GM12878 (cell line): ENCODE measurements at regions of chr13 and their contacts with region 1.

Region 1: GRCh38 chr13:80399340-80400163 is 58.6 kb upstream of the SPRY2 start:
- DNase-seq: peak; percentile 17
- ATAC-seq: peak; percentile 62
- H3K4me3 ChIP-seq: no peak overlapping the region
- H3K27ac ChIP-seq: no peak overlapping the region
- H3K4me1 ChIP-seq: no peaks in the 10 kb centered on the region
- H3K27me3 ChIP-seq: no peaks in the 10 kb centered on the region
- CTCF ChIP-seq: no peak
- EP300 ChIP-seq: peak; percentile 13 to 56; a peak in 3 of 4 replicates
- POLR2A ChIP-seq: no peak
- RAD21 ChIP-seq: no peak

Region 2: DNA sequence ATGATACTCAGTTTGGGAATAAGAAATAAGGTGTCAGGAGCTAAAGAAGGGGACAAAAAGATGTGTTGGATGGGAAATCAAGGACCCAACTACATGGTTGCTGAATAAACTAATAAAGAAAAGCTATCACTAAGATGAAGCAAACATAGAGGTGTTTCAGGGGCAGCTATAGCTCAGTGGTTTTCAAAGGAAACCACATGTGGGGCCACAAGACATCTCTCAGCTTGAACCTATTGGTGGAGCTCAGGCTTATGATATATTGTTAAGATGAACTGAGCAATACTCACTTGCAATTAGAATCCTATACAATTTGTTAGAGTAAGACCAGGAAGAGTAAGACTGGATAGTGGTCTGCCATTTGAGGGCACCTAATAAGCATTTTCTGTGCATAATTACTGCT is 13.6 kb before region 1 on chr13:
- CTCF ChIA-PET with region 1: interaction called, 17 read pairs
- POLR2A ChIA-PET with region 1: interaction called, 7 read pairs
- RAD21 ChIA-PET with region 1: interaction called, 37 read pairs
- SMC1A ChIA-PET with region 1: interaction called, 37 read pairs
- in situ Hi-C with region 1: no loop called
- intact Hi-C with region 1: no loop called
- DNase-seq: no peak
- ATAC-seq: peak; percentile 91
- H3K4me3 ChIP-seq: no peak overlapping the region
- H3K27ac ChIP-seq: no peak overlapping the region
- H3K4me1 ChIP-seq: no peaks in the 10 kb centered on the region
- H3K27me3 ChIP-seq: no peaks in the 10 kb centered on the region
- CTCF ChIP-seq: no peak
- EP300 ChIP-seq: no peak
- POLR2A ChIP-seq: no peak
- RAD21 ChIP-seq: 0 out of 2 replicates have a peak, but pooled peaks have one; percentile 14

Region 3: GRCh38 chr13:80419416-80419815 is 19.9 kb after region 1 on chr13:
- CTCF ChIA-PET with region 1: interaction called, 15 read pairs
- POLR2A ChIA-PET with region 1: interaction called, 13 read pairs
- RAD21 ChIA-PET with region 1: interaction called, 49 read pairs
- SMC1A ChIA-PET with region 1: interaction called, 133 read pairs
- in situ Hi-C with region 1: no loop called
- intact Hi-C with region 1: no loop called
- DNase-seq: no peak
- ATAC-seq: peak; percentile 63
- H3K4me3 ChIP-seq: no peak overlapping the region
- H3K27ac ChIP-seq: no peak overlapping the region
- H3K4me1 ChIP-seq: no peaks in the 10 kb centered on the region
- H3K27me3 ChIP-seq: no peaks in the 10 kb centered on the region
- CTCF ChIP-seq: no peak
- EP300 ChIP-seq: no peak
- POLR2A ChIP-seq: no peak
- RAD21 ChIP-seq: no peak

Region 4: GRCh38 chr13:80444240-80445015 is 44.9 kb after region 1 on chr13:
- CTCF ChIA-PET with region 1: interaction called, 6 read pairs
- POLR2A ChIA-PET with region 1: interaction called, 6 read pairs
- RAD21 ChIA-PET with region 1: interaction called, 23 read pairs
- SMC1A ChIA-PET with region 1: interaction called, 707 read pairs
- in situ Hi-C with region 1: no loop called
- intact Hi-C with region 1: no loop called
- DNase-seq: no peak
- ATAC-seq: peak; percentile 51
- H3K4me3 ChIP-seq: no peak overlapping the region
- H3K27ac ChIP-seq: no peak overlapping the region
- H3K4me1 ChIP-seq: no peaks in the 10 kb centered on the region
- H3K27me3 ChIP-seq: no peaks in the 10 kb centered on the region
- CTCF ChIP-seq: no peak
- EP300 ChIP-seq: no peak
- POLR2A ChIP-seq: no peak
- RAD21 ChIP-seq: no peak

Region 5: DNA sequence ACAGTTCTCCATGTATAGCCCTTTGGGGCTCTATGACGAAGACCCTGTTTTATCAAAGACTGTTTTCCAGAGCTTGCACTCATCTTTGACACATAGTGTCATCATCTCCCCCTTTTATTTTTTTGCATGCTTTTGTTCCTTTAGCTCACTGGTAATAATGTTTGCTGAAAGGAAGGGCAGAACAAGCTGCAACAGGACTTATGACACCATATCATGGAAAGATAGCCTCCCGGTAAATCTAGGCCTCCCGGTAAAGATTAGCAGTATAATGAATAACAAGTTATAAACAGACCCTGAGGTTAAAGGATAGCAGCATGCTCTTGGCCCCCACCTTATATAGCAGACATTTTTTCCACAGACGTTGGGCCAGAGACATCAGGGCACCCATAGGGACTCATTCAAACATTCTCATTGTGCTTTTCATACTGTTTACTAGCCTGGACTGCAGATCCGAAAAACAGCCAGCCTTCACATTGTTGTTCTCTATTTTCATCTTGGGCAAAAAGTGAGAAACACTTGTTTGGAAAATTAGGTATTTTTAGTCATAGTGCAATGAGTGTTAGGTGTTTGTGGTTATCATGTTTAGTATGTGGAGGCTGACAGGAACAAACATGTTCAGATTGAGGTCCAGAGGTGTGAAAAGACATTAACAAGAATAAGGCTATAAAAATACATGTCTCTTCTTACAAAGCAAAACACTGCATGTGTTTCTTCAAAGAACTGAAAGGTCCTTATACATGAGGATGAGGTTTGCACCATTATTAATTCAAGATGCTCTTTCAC is 78.3 kb after region 1 on chr13:
- CTCF ChIA-PET with region 1: interaction called, 5 read pairs
- POLR2A ChIA-PET with region 1: interaction called, 4 read pairs
- RAD21 ChIA-PET with region 1: interaction called, 33 read pairs
- SMC1A ChIA-PET with region 1: interaction called, 23 read pairs
- in situ Hi-C with region 1: no loop called
- intact Hi-C with region 1: no loop called
- DNase-seq: no peak
- ATAC-seq: peak; percentile 80
- H3K4me3 ChIP-seq: no peak overlapping the region
- H3K27ac ChIP-seq: no peak overlapping the region
- H3K4me1 ChIP-seq: no peaks in the 10 kb centered on the region
- H3K27me3 ChIP-seq: no peaks in the 10 kb centered on the region
- CTCF ChIP-seq: no peak
- EP300 ChIP-seq: peak; percentile 93 to 96
- POLR2A ChIP-seq: no peak
- RAD21 ChIP-seq: no peak